ENCODE measurements at regions of chr11 and their contacts with region 1.

Region 1: GRCh38 chr11:2400069-2400760 is at the start of gene TSSC4:
- DNase-seq: peak; percentile 99 to 100 (median 100)
- ATAC-seq: peak; percentile 90
- H3K4me3 ChIP-seq: peak within 1 kb of the TSS; percentile 96
- H3K4me3 Mint-ChIP-seq: peak within 1 kb of the TSS; percentile 87 to 97 (median 92)
- H3K27ac ChIP-seq: peak within 1 kb of the TSS; percentile 93
- H3K27ac Mint-ChIP-seq: peak within 1 kb of the TSS; percentile 90 to 97 (median 95)
- H3K4me1 ChIP-seq: peaks cover 19 to 22% of the 10 kb centered on the region in 2 donors
- H3K4me1 Mint-ChIP-seq: peaks cover 0 to 28% (median 16%) of the 10 kb centered on the region in 7 donors
- H3K27me3 ChIP-seq: no peaks in the 10 kb centered on the region
- H3K27me3 Mint-ChIP-seq: peaks cover 0 to 2% (median 0%) of the 10 kb centered on the region in 5 donors
- total RNA-seq, gene TSSC4: 43.6 to 55.0 (median 50.9) TPM

Region 2: GRCh38 chr11:1572197-1573076 is 827.8 kb before region 1 on chr11 and contains the start of gene DUSP8:
- CTCF ChIA-PET with region 1: no interaction called
- POLR2A ChIA-PET with region 1: no interaction called
- intact Hi-C with region 1: loop called in 1 of 2 experiments (anchors 5 kb)
- DNase-seq: peak; percentile 91 to 97 (median 94)
- ATAC-seq: peak; percentile 74
- H3K4me3 ChIP-seq: peak within 1 kb of the TSS; percentile 63
- H3K4me3 Mint-ChIP-seq: peak within 1 kb of the TSS; percentile 7 to 87 (median 82)
- H3K27ac ChIP-seq: peak within 1 kb of the TSS; percentile 90
- H3K27ac Mint-ChIP-seq: peak within 1 kb of the TSS in 7 of 9 donors; percentile 43 to 91 (median 84)
- H3K4me1 ChIP-seq: peaks cover 25 to 32% of the 10 kb centered on the region in 2 donors
- H3K4me1 Mint-ChIP-seq: peaks cover 2 to 22% (median 9%) of the 10 kb centered on the region in 7 donors
- H3K27me3 ChIP-seq: no peaks in the 10 kb centered on the region
- H3K27me3 Mint-ChIP-seq: peaks cover 0 to 41% (median 3%) of the 10 kb centered on the region in 5 donors
- total RNA-seq, gene DUSP8: 0.41 to 79.3 (median 4.4) TPM

Region 3: DNA sequence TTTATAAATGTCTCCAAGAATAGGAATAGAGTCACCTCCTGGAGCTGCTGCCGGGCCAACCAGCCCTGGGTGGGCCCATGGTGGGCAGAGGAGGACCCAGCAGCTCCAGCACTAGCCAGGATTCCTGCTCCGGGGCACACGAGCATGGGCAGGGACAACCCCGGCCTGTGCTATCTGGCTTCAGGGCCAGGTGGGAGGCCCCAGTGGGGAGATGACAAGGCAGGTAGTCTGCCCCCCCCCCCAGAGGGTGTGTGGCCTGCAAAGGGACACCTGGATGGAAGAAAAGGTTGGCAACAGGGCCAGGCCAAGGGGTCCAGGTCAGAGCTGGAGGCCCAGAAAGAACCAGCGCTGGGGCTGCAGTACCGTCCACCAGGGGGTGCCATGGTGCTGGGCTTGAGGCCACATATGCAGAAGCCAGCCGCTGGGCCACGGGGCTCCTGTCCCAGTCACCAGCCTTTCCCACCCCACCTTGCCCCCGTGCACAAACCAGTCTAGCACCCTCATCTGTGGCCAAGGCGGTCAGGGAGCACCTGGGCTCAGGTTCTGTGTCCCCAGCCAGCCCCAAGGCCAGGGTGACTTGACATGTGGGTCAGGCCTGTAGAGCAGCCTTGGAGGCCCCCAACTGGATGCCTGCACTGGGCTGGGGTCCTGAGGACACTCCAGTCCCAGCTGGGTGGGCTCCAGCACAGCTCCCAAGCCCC is 94.9 kb before region 1 on chr11:
- CTCF ChIA-PET with region 1: interaction called, 13 read pairs
- POLR2A ChIA-PET with region 1: interaction called, 27 read pairs
- intact Hi-C with region 1: loop called (anchors 1 kb)
- DNase-seq: peak; percentile 62 to 84 (median 76)
- ATAC-seq: peak; percentile 65
- H3K4me3 ChIP-seq: peak overlapping the region; percentile 38
- H3K4me3 Mint-ChIP-seq: peak overlapping the region; percentile 77 to 98 (median 92)
- H3K27ac ChIP-seq: peak overlapping the region; percentile 81
- H3K27ac Mint-ChIP-seq: peak overlapping the region; percentile 86 to 96 (median 90)
- H3K4me1 ChIP-seq: peaks cover 40 to 55% of the 10 kb centered on the region in 2 donors
- H3K4me1 Mint-ChIP-seq: peaks cover 12 to 54% (median 36%) of the 10 kb centered on the region in 7 donors
- H3K27me3 ChIP-seq: no peaks in the 10 kb centered on the region
- H3K27me3 Mint-ChIP-seq: no peaks in the 10 kb centered on the region

Region 4: GRCh38 chr11:2420502-2421225 is 20.4 kb after region 1 on chr11:
- CTCF ChIA-PET with region 1: interaction called, 11 read pairs
- POLR2A ChIA-PET with region 1: interaction called, 4 read pairs
- intact Hi-C with region 1: loop called (anchors 1 kb)
- DNase-seq: peak; percentile 44 to 74 (median 70)
- ATAC-seq: peak; percentile 93
- H3K4me3 ChIP-seq: no peak overlapping the region
- H3K4me3 Mint-ChIP-seq: no peak overlapping the region
- H3K27ac ChIP-seq: no peak overlapping the region
- H3K27ac Mint-ChIP-seq: no peak overlapping the region
- H3K4me1 ChIP-seq: peaks cover 0 to 10% of the 10 kb centered on the region in 2 donors
- H3K4me1 Mint-ChIP-seq: peaks cover 0 to 3% (median 2%) of the 10 kb centered on the region in 7 donors
- H3K27me3 ChIP-seq: no peaks in the 10 kb centered on the region
- H3K27me3 Mint-ChIP-seq: no peaks in the 10 kb centered on the region

Region 5: DNA sequence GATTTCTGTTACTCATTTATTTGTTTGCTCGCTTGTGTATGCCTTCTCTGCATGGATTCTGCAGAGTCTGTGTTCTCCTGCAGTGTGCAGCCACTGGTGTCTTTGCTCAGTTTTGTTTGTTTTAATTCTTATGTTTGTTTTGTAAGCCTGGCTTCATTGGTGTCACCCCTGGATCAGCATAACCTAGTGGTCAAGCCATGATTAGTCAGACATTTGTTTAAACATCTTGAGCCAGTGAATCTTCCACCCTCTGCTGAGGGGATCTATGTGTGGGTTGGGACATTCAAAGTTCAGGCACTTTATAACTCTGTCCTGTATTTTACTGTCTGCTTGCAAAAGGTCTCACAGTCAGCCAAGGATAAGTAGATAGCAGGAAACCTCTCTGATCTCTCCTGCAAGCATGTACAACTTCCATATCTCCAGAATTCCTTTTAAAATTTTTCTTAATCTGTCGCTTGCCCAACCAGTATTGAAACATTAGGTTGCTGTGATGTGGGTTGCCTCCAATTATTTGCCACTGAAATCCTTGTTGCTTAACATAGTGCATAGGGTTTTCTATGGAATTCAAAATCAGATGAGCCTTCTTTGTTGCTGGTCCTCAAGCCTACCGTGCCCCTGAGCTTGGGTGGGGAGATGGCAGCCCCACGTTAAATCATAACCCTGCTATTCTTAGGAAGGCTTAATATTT is 212.8 kb after region 1 on chr11:
- CTCF ChIA-PET with region 1: no interaction called
- POLR2A ChIA-PET with region 1: no interaction called
- intact Hi-C with region 1: no loop called
- DNase-seq: no peak
- ATAC-seq: no peak
- H3K4me3 ChIP-seq: no peak overlapping the region
- H3K4me3 Mint-ChIP-seq: no peak overlapping the region
- H3K27ac ChIP-seq: no peak overlapping the region
- H3K27ac Mint-ChIP-seq: no peak overlapping the region
- H3K4me1 ChIP-seq: no peaks in the 10 kb centered on the region
- H3K4me1 Mint-ChIP-seq: peaks cover 0 to 19% (median 5%) of the 10 kb centered on the region in 7 donors
- H3K27me3 ChIP-seq: no peaks in the 10 kb centered on the region
- H3K27me3 Mint-ChIP-seq: peaks cover 0 to 8% (median 0%) of the 10 kb centered on the region in 5 donors

Region 6: GRCh38 chr11:2992234-2992996 is 592.2 kb after region 1 on chr11 and contains the start of gene NAP1L4:
- CTCF ChIA-PET with region 1: no interaction called
- POLR2A ChIA-PET with region 1: interaction called, 4 read pairs
- intact Hi-C with region 1: loop called (anchors 1 kb)
- DNase-seq: peak; percentile 88 to 97 (median 95)
- ATAC-seq: peak; percentile 93
- H3K4me3 ChIP-seq: peak within 1 kb of the TSS; percentile 93
- H3K4me3 Mint-ChIP-seq: peak within 1 kb of the TSS; percentile 94 to 100 (median 98)
- H3K27ac ChIP-seq: peak within 1 kb of the TSS; percentile 90
- H3K27ac Mint-ChIP-seq: peak within 1 kb of the TSS; percentile 92 to 99 (median 97)
- H3K4me1 ChIP-seq: peaks cover 2 to 4% of the 10 kb centered on the region in 2 donors
- H3K4me1 Mint-ChIP-seq: peaks cover 23 to 36% (median 27%) of the 10 kb centered on the region in 7 donors
- H3K27me3 ChIP-seq: no peaks in the 10 kb centered on the region
- H3K27me3 Mint-ChIP-seq: no peaks in the 10 kb centered on the region
- total RNA-seq, gene NAP1L4: 245 to 356 (median 294) TPM